ENCODE measurements at regions of chr5 and their contacts with region 1.

Region 1: DNA sequence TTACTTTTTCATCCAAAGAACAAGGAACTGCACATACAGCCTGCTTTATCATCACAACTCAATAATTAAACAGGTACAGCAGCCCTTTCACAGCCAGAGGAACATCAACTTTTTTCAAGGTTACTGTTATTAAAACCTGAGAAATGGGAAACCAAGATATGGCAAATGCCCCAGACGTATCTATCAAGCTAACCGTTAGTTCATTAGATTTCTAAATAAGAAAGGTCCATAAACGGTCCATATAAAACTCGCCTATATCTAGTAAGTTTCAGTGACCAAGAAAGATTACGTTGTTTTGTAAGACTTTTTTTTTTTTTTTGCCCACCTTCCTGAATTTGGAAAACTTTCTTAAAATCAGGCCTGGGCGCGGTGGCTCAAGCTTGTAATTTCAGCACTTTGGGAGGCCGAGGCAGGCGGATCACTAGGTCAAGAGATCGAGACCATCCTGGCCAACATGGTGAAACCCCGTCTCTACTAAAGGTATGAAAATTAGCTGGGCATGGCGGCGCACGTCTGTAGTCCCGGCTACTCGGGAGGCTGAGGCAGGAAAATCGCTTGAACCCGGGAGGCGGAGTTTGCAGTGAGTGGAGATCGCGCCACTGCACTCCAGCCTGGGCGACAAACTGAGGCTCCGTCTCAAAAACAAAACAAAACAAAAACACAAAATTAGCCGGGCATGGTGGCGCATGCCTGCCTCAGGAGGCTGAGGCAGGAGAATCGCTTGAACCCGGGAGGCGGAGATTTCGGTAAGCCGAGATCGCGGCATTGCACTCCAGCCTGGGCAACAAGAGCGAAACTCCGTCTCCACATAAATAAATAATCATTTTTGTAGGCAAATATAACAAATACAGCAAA is 1.8 kb downstream of the GOLPH3 start:
- DNase-seq: no peak
- ATAC-seq: no peak
- H3K4me3 ChIP-seq: peak overlapping the region; percentile 81 to 83
- H3K27ac ChIP-seq: peak overlapping the region; percentile 94
- H3K4me1 ChIP-seq: peaks cover 23% of the 10 kb centered on the region
- H3K27me3 ChIP-seq: no peaks in the 10 kb centered on the region
- CTCF ChIP-seq: no peak

Region 2: GRCh38 chr5:32129074-32129598 is 43.1 kb before region 1 on chr5:
- CTCF ChIA-PET with region 1: no interaction called
- POLR2A ChIA-PET with region 1: no interaction called
- in situ Hi-C with region 1: no loop called
- intact Hi-C with region 1: no loop called
- DNase-seq: no peak
- ATAC-seq: no peak
- H3K4me3 ChIP-seq: no peak overlapping the region
- H3K27ac ChIP-seq: no peak overlapping the region
- H3K4me1 ChIP-seq: no peaks in the 10 kb centered on the region
- H3K27me3 ChIP-seq: no peaks in the 10 kb centered on the region
- CTCF ChIP-seq: no peak

Region 3: DNA sequence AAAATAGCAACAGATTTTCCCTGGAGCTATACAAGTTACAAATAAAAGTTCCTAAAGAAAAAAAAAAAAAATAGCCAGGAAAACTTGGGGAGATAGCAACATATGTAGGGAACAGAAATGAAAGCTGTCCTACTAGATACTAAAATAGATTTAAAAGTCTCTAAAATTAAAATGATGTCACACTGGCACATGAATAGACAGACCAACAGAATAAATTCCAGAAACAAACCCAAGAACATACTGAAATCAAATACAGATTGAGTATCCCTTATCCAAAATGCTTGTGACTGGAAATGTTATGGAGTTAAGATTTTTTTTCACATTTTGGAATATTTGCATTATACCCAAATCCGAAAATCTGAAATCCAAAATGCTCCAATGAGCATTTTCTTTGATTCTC is 21.9 kb before region 1 on chr5:
- CTCF ChIA-PET with region 1: no interaction called
- POLR2A ChIA-PET with region 1: interaction called, 11 read pairs
- in situ Hi-C with region 1: no loop called
- intact Hi-C with region 1: no loop called
- DNase-seq: no peak
- ATAC-seq: no peak
- H3K4me3 ChIP-seq: no peak overlapping the region
- H3K27ac ChIP-seq: no peak overlapping the region
- H3K4me1 ChIP-seq: peaks cover 5% of the 10 kb centered on the region; the same call in 1 of the 2 replicates
- H3K27me3 ChIP-seq: no peaks in the 10 kb centered on the region
- CTCF ChIP-seq: no peak